Naive thymus-derived CD4-positive, alpha-beta T cell (primary cell): ENCODE measurements at regions of chr12 and their contacts with region 1.

Region 1: DNA sequence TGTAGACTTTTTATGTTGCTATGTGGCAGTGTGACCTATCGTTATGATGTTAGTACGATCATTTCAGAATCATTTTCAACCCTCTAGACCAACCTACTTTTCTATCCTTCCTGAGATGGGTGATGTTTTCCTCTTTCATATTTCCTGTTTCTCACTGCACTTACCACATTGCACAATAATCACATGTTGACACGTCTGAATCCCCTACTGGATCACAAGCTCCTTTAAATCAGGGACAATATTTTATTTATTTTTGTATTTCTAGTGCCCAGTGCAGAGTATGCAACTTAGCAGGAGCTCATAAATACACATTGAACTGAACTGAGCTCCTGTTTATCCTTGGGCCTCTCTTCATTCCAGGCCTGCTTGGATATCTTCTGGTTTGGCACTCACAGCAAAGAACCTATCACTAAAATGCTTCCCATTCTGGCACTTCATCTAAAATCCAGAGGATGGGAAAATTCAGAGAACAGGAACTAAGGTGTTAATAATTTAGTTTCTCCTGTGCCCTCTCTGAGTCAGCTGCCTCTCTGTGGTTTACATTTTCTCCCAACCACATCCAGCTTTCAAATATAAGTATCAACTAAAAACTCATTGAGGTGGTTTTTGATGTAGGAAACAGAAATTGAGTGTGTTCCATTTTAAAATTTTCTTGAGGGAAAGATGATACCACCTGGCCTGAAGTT is 69.4 kb upstream of the DYRK2 start:
- DNase-seq: peak in 7 of 9 donors; percentile 52 to 80 (median 72)
- ATAC-seq: peak; percentile 80
- H3K4me3 ChIP-seq: peak overlapping the region; percentile 47
- H3K4me3 Mint-ChIP-seq: peak overlapping the region; percentile 56 to 87 (median 76)
- H3K27ac ChIP-seq: no peak overlapping the region
- H3K27ac Mint-ChIP-seq: peak overlapping the region; percentile 3 to 90 (median 61)
- H3K4me1 ChIP-seq: peaks cover 35 to 50% of the 10 kb centered on the region in 2 donors
- H3K4me1 Mint-ChIP-seq: peaks cover 32 to 69% (median 63%) of the 10 kb centered on the region in 7 donors
- H3K27me3 ChIP-seq: no peaks in the 10 kb centered on the region
- H3K27me3 Mint-ChIP-seq: peaks cover 0 to 33% (median 0%) of the 10 kb centered on the region in 5 donors

Region 2: GRCh38 chr12:67202043-67203012 is 376.8 kb before region 1 on chr12:
- CTCF ChIA-PET with region 1: no interaction called
- POLR2A ChIA-PET with region 1: no interaction called
- intact Hi-C with region 1: no loop called
- DNase-seq: no peak
- ATAC-seq: no peak
- H3K4me3 ChIP-seq: no peak overlapping the region
- H3K4me3 Mint-ChIP-seq: no peak overlapping the region
- H3K27ac ChIP-seq: no peak overlapping the region
- H3K27ac Mint-ChIP-seq: no peak overlapping the region
- H3K4me1 ChIP-seq: no peaks in the 10 kb centered on the region
- H3K4me1 Mint-ChIP-seq: peaks cover 0 to 2% (median 0%) of the 10 kb centered on the region in 7 donors
- H3K27me3 ChIP-seq: no peaks in the 10 kb centered on the region
- H3K27me3 Mint-ChIP-seq: peaks cover 4 to 44% (median 32%) of the 10 kb centered on the region in 5 donors

Region 3: GRCh38 chr12:67441736-67442346 is 137.3 kb before region 1 on chr12:
- CTCF ChIA-PET with region 1: interaction called, 3 read pairs
- POLR2A ChIA-PET with region 1: no interaction called
- intact Hi-C with region 1: loop called (anchors 1 to 5 kb)
- DNase-seq: peak; percentile 50 to 76 (median 72)
- ATAC-seq: peak; percentile 94
- H3K4me3 ChIP-seq: no peak overlapping the region
- H3K4me3 Mint-ChIP-seq: peak overlapping the region in 9 of 10 donors; percentile 29 to 78 (median 59)
- H3K27ac ChIP-seq: no peak overlapping the region
- H3K27ac Mint-ChIP-seq: peak overlapping the region in 8 of 9 donors; percentile 17 to 93 (median 53)
- H3K4me1 ChIP-seq: peaks cover 5 to 7% of the 10 kb centered on the region in 2 donors
- H3K4me1 Mint-ChIP-seq: peaks cover 8 to 38% (median 34%) of the 10 kb centered on the region in 7 donors
- H3K27me3 ChIP-seq: no peaks in the 10 kb centered on the region
- H3K27me3 Mint-ChIP-seq: peaks cover 0 to 8% (median 0%) of the 10 kb centered on the region in 5 donors

Region 4: DNA sequence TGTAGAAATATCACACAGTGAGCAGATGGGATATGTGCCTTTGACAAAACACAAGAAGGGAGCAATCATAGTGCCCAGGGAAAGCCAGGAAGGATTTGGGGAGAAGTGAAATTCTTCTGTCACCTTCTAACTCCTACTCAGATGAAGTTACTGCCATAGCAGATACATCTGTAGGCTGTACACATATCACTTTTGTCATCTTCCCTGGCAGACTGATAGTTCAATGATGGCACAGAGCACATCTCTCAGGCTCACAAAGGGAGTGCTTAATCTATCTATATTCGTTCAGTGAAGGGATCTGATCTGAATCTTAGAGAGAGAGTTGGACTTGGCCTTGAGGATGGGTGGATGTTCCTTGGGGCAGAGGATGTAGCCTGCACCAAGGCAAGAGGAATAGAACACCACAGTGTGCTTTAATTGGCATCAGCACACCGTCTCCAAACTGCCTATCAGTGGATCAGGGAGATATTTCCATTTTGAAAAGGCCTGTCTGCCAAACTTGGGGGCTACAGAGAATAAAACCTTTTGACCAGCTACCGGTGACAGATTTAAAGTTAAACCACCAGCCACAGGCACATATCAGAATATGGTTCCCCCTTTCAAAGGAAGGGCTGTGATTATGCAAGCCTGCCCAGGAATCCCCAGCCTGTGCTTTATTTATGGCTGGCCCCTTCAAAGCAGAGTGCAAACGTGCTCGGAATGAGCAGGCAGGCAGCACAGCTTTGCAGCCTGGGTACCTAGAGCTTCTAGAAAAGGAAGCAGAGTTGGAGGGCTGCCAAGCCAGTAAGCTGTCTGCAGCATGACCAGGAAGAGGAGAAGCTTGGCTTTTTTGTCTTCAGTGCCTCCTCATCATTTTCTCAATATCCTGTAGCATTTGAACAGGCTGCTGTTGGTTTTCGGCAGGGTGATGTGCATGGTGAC is 96.1 kb before region 1 on chr12:
- CTCF ChIA-PET with region 1: no interaction called
- POLR2A ChIA-PET with region 1: interaction called, 6 read pairs
- intact Hi-C with region 1: loop called in 1 of 2 experiments (anchors 1 kb)
- DNase-seq: peak in 8 of 9 donors; percentile 47 to 89 (median 82)
- ATAC-seq: peak; percentile 89
- H3K4me3 ChIP-seq: no peak overlapping the region
- H3K4me3 Mint-ChIP-seq: peak overlapping the region in 9 of 10 donors; percentile 1 to 61 (median 26)
- H3K27ac ChIP-seq: peak overlapping the region; percentile 49
- H3K27ac Mint-ChIP-seq: peak overlapping the region; percentile 41 to 91 (median 82)
- H3K4me1 ChIP-seq: peaks cover 39 to 45% of the 10 kb centered on the region in 2 donors
- H3K4me1 Mint-ChIP-seq: peaks cover 28 to 49% (median 46%) of the 10 kb centered on the region in 7 donors
- H3K27me3 ChIP-seq: no peaks in the 10 kb centered on the region
- H3K27me3 Mint-ChIP-seq: no peaks in the 10 kb centered on the region

Region 5: DNA sequence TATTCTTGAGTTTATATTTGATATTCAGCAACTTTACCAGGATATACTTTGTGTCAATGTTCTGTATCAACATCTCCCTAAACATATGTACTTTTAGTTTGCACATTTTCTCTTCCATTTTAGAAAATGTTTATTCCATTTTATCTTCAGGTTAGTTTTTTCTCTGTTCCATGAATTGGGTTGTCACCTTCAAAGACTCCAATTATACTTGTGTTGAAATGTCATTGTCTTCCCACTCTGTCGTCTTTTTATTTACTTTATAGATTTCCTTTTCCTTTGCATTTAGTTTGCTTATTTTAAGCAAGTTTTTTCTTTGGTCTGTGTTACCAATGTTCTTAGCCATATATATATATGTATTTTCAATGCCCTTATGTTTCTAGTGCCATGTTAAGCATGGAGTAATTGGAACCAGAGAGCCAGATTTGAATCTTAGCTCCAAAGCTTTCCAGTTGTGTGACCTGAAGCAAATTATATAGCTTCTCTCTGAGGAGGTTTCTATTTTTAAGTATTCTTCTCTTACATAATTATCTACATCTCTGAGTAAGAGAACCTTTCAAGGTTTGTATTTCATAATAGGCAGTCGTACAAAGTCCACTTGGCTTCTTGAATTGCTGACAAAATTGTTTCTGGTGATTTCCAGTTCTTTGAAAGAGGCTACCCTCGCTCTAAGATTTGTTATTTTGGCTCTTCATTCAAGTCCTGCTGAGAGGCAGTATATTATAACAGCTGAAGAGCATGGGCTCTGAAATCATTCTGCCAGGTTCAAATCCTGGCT is 16.4 kb before region 1 on chr12:
- CTCF ChIA-PET with region 1: no interaction called
- POLR2A ChIA-PET with region 1: interaction called, 11 read pairs
- intact Hi-C with region 1: no loop called
- DNase-seq: no peak
- ATAC-seq: no peak
- H3K4me3 ChIP-seq: no peak overlapping the region
- H3K4me3 Mint-ChIP-seq: no peak overlapping the region
- H3K27ac ChIP-seq: no peak overlapping the region
- H3K27ac Mint-ChIP-seq: no peak overlapping the region
- H3K4me1 ChIP-seq: no peaks in the 10 kb centered on the region
- H3K4me1 Mint-ChIP-seq: peaks cover 0 to 18% (median 7%) of the 10 kb centered on the region in 7 donors
- H3K27me3 ChIP-seq: no peaks in the 10 kb centered on the region
- H3K27me3 Mint-ChIP-seq: peaks cover 0 to 18% (median 0%) of the 10 kb centered on the region in 5 donors

Region 6: GRCh38 chr12:67630373-67631088 is 51.4 kb after region 1 on chr12:
- CTCF ChIA-PET with region 1: interaction called, 9 read pairs
- POLR2A ChIA-PET with region 1: interaction called, 43 read pairs
- intact Hi-C with region 1: loop called (anchors 1 kb)
- DNase-seq: peak; percentile 51 to 97 (median 96)
- ATAC-seq: peak; percentile 100
- H3K4me3 ChIP-seq: peak overlapping the region; percentile 20
- H3K4me3 Mint-ChIP-seq: peak overlapping the region; percentile 21 to 89 (median 78)
- H3K27ac ChIP-seq: peak overlapping the region; percentile 79
- H3K27ac Mint-ChIP-seq: peak overlapping the region; percentile 91 to 100 (median 96)
- H3K4me1 ChIP-seq: peaks cover 83 to 85% of the 10 kb centered on the region in 2 donors
- H3K4me1 Mint-ChIP-seq: peaks cover 42 to 98% (median 93%) of the 10 kb centered on the region in 7 donors
- H3K27me3 ChIP-seq: no peaks in the 10 kb centered on the region
- H3K27me3 Mint-ChIP-seq: peaks cover 0 to 12% (median 0%) of the 10 kb centered on the region in 5 donors

Region 7: GRCh38 chr12:67943226-67943892 is 364.2 kb after region 1 on chr12:
- CTCF ChIA-PET with region 1: no interaction called
- POLR2A ChIA-PET with region 1: no interaction called
- intact Hi-C with region 1: loop called in 1 of 2 experiments (anchors 1 kb)
- DNase-seq: peak; percentile 10 to 76 (median 64)
- ATAC-seq: peak; percentile 81
- H3K4me3 ChIP-seq: no peak overlapping the region
- H3K4me3 Mint-ChIP-seq: no peak overlapping the region
- H3K27ac ChIP-seq: no peak overlapping the region
- H3K27ac Mint-ChIP-seq: no peak overlapping the region
- H3K4me1 ChIP-seq: no peaks in the 10 kb centered on the region
- H3K4me1 Mint-ChIP-seq: peaks cover 0 to 6% (median 0%) of the 10 kb centered on the region in 7 donors
- H3K27me3 ChIP-seq: no peaks in the 10 kb centered on the region
- H3K27me3 Mint-ChIP-seq: peaks cover 0 to 18% (median 0%) of the 10 kb centered on the region in 5 donors